ENCODE measurements at regions of chr3 and their contacts with region 1.

Region 1: GRCh38 chr3:100954990-100955389 is 38.2 kb downstream of the ABI3BP start:
- DNase-seq: peak; percentile 27
- ATAC-seq: peak; percentile 72 to 94

Region 2: GRCh38 chr3:100316641-100317069 is 638.3 kb before region 1 on chr3:
- intact Hi-C with region 1: no loop called
- DNase-seq: peak; percentile 37
- ATAC-seq: peak; percentile 84

Region 3: GRCh38 chr3:101036213-101036618 is 81.2 kb after region 1 on chr3:
- intact Hi-C with region 1: loop called in 1 of 2 experiments (anchors 10 kb)
- DNase-seq: peak; percentile 26
- ATAC-seq: peak; percentile 58 to 92

Region 4: DNA sequence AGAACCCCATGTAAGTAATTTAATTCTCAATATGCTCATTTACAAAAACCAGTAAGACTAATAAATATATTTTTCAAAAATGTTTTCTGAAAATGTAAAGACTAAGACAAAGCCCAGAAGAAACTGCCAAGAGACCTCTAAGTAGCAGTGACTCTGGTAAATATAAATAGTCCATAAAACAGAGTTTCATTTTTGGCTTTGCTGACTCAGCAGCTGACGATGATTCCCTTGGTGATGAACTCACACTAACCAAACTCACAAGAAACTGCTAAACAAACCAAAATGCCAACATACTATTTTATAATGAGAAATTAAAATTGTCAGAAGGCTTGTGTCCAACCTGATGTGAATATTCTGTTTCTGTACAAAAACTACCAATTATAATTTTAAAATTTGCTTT is 396.8 kb after region 1 on chr3:
- intact Hi-C with region 1: no loop called
- DNase-seq: no peak
- ATAC-seq: no peak

Measured in left cardiac atrium (tissue), 4 donors.